ENCODE measurements at regions of chr1 and their contacts with region 1.

Region 1: GRCh38 chr1:46616277-46617107 is at the start of gene MOB3C:
- DNase-seq: peak; percentile 79
- H3K4me3 ChIP-seq: peak within 1 kb of the TSS; percentile 44 to 70 (median 62)
- H3K27ac ChIP-seq: no peak within 1 kb of the TSS
- H3K4me1 ChIP-seq: peaks cover 11% of the 10 kb centered on the region
- H3K27me3 ChIP-seq: no peaks in the 10 kb centered on the region
- CTCF ChIP-seq: no peak
- POLR2A ChIP-seq: peak; percentile 53
- total RNA-seq, gene MOB3C: 6.5 and 8.4 TPM in 2 replicates

Region 2: DNA sequence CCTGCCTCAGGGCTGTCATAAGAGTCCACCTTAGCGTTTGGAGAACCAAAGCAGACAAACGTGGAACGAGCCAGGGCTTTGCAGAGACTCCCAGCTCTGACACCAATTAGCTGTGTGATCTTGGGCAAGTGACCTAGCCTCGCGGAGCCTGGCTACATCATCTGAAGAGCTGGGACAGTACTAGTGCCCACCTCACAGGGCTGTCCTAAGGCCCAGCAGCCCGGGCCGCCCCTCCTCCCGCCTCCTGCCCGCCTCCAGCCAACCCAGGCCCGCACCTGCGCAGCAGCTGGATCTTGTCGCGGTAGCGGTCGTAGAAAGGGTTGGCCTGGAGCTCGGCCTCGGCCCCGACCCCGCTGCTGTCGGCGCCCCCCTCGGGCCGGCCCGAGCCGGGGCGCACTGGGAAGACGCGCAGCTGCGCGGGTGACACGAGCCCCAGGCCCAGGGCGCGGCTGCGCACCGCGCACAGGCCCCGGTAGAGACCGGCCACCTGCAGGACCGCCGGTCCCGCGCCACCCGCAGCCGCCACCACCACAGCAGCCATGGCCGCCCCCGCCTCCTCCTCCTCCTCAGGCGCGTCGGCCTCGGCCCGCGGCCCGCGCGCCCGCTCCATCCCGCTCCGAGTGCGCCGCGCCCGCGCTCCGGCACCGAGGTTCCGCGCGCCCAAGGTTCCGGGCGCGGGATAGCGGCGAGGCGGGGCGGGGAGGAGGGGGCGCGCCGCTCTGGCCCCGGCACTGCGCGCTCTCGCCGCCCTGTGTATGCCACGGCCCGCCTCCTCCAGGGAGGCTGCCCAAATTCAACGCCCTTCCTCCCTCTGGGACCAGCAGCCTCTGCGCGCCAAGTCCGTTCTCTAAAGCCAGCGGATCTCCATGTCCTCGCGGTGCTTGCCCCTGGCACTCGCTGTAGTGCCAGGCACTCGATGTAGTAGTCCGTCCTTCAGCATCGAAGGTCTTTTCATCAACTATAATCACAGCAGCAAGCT is 51.6 kb after region 1 on chr1 and contains the start of gene ATPAF1:
- CTCF ChIA-PET with region 1: no interaction called
- POLR2A ChIA-PET with region 1: no interaction called
- dilution Hi-C with region 1: no loop called
- intact Hi-C with region 1: loop called (anchors 2 kb)
- DNase-seq: peak; percentile 61
- H3K4me3 ChIP-seq: peak within 1 kb of the TSS; percentile 64 to 87 (median 76)
- H3K27ac ChIP-seq: no peak within 1 kb of the TSS
- H3K4me1 ChIP-seq: peaks cover 10% of the 10 kb centered on the region
- H3K27me3 ChIP-seq: no peaks in the 10 kb centered on the region
- CTCF ChIP-seq: no peak
- POLR2A ChIP-seq: peak; percentile 66
- total RNA-seq, gene ATPAF1: 28.4 and 29.6 TPM in 2 replicates

Measured in endothelial cell of umbilical vein (primary cell).